ENCODE measurements at regions of chr7 and their contacts with region 1.

Region 1: DNA sequence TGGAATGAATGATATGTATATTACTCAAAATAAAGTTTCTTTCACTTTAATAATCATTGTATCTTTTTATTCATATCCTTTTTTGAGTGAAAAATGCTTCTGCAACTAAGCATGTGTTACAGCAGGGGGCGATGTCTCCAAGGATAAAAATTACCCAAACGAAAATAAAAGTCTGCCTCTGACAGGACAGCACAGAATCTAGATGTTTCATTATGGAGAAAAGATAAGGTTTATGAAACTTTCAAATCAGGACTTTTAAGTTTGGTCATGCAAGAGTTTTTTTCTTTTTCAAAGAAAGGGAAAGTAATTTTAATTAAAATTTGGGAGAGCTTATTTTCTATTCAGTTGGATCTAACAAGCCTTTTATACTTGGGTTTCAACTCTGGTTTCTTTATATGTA is 48.4 kb downstream of the TES start:
- DNase-seq: no peak
- ATAC-seq: peak; percentile 56; the same call in 1 of the 2 replicates
- H3K4me3 ChIP-seq: no peak overlapping the region
- H3K27ac ChIP-seq: peak overlapping the region; percentile 100
- H3K4me1 ChIP-seq: peaks cover 22% of the 10 kb centered on the region
- H3K27me3 ChIP-seq: no peaks in the 10 kb centered on the region
- CTCF ChIP-seq: peak; percentile 75; the same call in 1 of the 2 replicates

Region 2: DNA sequence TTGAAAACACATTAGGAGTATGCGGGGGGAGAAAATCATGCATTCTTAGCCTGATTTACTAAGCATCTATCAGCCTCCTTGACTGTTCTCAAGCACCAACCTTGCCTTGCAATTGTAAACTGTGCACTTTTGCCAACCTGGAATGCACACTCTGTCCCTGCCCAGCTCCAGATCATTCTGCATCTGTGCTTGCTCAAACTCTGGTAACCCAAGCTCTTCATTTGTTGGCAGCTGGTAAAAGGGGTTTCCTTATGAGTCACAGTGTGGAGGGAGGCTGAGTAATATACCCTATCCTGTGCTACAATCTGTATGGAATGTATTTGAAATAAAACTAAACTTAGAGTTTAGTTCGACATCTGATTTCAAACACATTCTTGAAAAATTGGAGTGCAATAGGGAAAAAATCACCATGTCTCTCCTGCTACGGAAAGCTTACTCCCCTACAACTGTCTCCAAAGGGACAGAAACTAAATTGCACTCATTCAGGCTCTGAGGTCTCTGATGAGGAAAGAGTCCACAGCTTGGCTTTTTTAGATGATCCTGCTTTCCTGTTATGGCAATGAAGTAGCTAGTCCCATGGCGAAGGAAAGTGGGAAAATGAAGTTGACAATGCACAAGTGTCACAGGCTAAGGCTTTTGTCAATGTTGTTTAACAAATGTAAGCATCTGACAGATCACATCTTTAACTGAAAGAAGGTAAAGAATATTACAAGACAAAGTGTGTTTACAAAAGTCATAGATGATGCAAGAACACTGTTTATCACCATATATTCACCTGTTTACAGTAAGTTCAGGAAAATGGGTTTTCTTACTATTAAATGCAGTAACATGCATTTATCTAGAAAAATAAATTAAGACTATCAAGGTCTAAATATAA is 13.5 kb after region 1 on chr7:
- CTCF ChIA-PET with region 1: no interaction called
- POLR2A ChIA-PET with region 1: interaction called, 16 read pairs
- in situ Hi-C with region 1: no loop called
- intact Hi-C with region 1: no loop called
- DNase-seq: peak; percentile 98
- ATAC-seq: peak; percentile 96
- H3K4me3 ChIP-seq: peak overlapping the region in 1 of 2 experiments; percentile 21; a peak in 3 of 4 replicates
- H3K27ac ChIP-seq: peak overlapping the region; percentile 100
- H3K4me1 ChIP-seq: peaks cover 46% of the 10 kb centered on the region
- H3K27me3 ChIP-seq: no peaks in the 10 kb centered on the region
- CTCF ChIP-seq: no peak

Region 3: DNA sequence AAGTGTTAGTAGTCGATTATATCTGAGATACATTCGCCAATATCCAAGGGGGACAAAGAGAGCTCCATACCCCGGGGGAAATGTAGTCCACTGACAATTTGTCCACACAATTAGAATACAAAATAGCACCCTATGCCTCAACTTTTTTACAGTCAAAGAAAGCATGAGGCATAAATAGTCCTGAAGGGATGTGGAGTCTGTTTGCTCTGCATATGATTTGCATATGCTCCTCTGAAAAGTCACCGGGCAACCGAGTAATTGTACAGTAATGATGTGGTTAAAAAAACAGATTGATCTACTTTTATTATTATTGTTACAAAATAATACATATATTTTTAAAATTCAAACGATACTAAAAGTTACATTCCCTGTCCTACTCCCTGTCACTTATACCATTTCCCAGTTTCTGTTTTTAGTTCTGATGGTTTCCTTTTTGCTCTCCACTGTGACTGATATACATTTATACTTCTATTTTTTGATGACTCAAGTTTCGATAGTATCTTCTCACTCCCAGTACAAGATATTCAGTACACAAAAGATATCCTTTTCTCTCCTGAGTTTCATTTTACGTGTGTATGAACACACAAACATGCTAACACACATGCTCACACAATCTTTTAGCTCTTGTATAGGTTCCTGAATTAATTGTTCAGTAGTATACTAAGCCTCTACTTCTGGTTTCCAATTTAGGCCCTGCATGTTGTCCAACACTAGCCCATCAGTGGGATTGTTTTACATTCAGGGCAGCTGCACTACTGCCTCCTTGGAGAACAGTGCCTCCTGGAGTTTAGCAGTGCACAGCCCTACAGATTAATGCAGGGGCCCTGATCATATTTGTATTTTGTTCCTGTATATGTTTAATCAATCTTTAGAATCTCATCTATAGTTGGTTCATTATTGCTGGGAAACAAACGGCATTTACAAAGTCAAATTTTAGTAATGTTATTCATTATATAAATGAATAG is 82.5 kb after region 1 on chr7:
- CTCF ChIA-PET with region 1: no interaction called
- POLR2A ChIA-PET with region 1: no interaction called
- in situ Hi-C with region 1: no loop called
- intact Hi-C with region 1: loop called (anchors 5 kb)
- DNase-seq: no peak
- ATAC-seq: peak; percentile 81
- H3K4me3 ChIP-seq: no peak overlapping the region
- H3K27ac ChIP-seq: peak overlapping the region; percentile 96
- H3K4me1 ChIP-seq: peaks cover 23% of the 10 kb centered on the region
- H3K27me3 ChIP-seq: no peaks in the 10 kb centered on the region
- CTCF ChIP-seq: peak; percentile 85

Region 4: GRCh38 chr7:116443101-116443523 is 184.4 kb after region 1 on chr7:
- CTCF ChIA-PET with region 1: interaction called, 8 read pairs
- POLR2A ChIA-PET with region 1: no interaction called
- in situ Hi-C with region 1: no loop called
- intact Hi-C with region 1: loop called (anchors 10 kb)
- DNase-seq: peak; percentile 95
- ATAC-seq: peak; percentile 94
- H3K4me3 ChIP-seq: no peak overlapping the region
- H3K27ac ChIP-seq: peak overlapping the region; percentile 96
- H3K4me1 ChIP-seq: peaks cover 23% of the 10 kb centered on the region
- H3K27me3 ChIP-seq: no peaks in the 10 kb centered on the region
- CTCF ChIP-seq: no peak

Region 5: DNA sequence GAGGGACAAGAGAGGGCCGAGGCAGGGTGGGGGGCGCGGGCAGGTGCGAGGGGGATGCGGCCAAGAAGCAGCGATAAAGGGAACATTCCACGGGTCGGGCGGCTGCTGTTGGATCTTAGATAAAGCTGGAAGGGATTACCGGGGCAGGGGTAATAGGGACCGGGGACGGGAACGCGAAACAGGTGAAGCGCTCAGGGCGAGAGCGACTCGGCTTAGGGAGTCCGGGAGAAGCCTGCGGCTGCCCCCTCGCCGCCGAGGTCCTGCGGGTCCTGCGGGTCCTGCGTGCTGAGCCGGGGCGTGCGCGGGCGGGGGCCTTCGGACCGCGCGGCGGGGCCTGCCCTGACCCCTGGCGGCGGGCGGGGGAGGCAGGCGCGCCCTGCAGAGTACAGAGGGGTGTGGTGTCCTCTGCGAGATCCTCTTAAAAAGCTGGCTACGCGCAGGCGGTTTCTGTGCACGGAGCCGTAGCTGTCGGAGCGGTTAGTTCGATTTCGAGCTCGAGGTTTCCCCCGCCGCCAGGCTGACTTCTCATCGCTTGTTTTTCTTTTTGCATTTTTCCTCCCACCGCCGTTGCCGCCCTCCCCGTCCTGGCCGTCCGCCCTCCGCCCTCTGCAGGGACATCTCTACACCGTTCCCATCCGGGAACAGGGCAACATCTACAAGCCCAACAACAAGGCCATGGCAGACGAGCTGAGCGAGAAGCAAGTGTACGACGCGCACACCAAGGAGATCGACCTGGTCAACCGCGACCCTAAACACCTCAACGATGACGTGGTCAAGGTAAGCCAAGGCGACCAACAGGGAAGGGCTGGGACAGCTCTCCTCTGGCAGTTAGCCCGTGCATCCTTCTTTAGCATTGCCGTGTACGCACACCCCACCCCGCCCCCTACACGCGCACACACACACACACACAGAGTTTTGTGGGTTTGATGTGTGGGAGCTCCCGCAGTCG is 267.5 kb after region 1 on chr7:
- CTCF ChIA-PET with region 1: no interaction called
- POLR2A ChIA-PET with region 1: interaction called, 3 read pairs
- in situ Hi-C with region 1: no loop called
- intact Hi-C with region 1: loop called (anchors 2 kb)
- DNase-seq: no peak
- ATAC-seq: peak; percentile 77
- H3K4me3 ChIP-seq: peak overlapping the region; percentile 78 to 90
- H3K27ac ChIP-seq: peak overlapping the region; percentile 99
- H3K4me1 ChIP-seq: peaks cover 67% of the 10 kb centered on the region
- H3K27me3 ChIP-seq: no peaks in the 10 kb centered on the region
- CTCF ChIP-seq: peak; percentile 98

Region 6: DNA sequence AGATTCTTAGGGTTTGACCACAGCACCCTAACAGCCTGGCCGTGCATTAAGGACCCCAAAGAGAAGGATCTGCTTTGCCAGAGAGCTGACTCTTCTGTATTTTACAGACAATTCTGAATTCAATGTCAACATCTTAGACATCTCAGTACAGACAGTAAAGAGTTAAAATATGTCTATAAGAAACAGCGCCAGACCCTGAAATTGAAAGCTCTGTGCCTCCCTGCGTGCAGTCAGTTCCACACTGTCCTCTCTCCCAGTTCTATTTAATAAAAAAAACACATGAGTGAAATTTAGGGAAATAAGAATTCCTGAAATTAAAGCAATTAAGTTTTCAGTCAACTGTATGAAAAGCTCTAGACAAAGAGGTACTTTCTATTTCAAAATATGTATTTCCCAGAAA is 458.4 kb after region 1 on chr7:
- CTCF ChIA-PET with region 1: no interaction called
- POLR2A ChIA-PET with region 1: interaction called, 17 read pairs
- in situ Hi-C with region 1: no loop called
- intact Hi-C with region 1: no loop called
- DNase-seq: no peak
- ATAC-seq: peak; percentile 36
- H3K4me3 ChIP-seq: peak overlapping the region in 1 of 2 experiments; percentile 19; a peak in 2 of 4 replicates
- H3K27ac ChIP-seq: peak overlapping the region; percentile 87
- H3K4me1 ChIP-seq: peaks cover 37% of the 10 kb centered on the region
- H3K27me3 ChIP-seq: no peaks in the 10 kb centered on the region
- CTCF ChIP-seq: no peak